ENCODE measurements at regions of chr17 and their contacts with region 1.

Region 1: GRCh38 chr17:38674749-38675615 is at the start of gene EPOP:
- DNase-seq: peak; percentile 92 to 97
- ATAC-seq: peak; percentile 92
- H3K4me3 ChIP-seq: peak within 1 kb of the TSS; percentile 5 to 61
- H3K27ac ChIP-seq: no peak within 1 kb of the TSS
- H3K4me1 ChIP-seq: no peaks in the 10 kb centered on the region
- H3K27me3 ChIP-seq: no peaks in the 10 kb centered on the region
- total RNA-seq, gene EPOP: 1.3 to 1.5 TPM

Region 2: DNA sequence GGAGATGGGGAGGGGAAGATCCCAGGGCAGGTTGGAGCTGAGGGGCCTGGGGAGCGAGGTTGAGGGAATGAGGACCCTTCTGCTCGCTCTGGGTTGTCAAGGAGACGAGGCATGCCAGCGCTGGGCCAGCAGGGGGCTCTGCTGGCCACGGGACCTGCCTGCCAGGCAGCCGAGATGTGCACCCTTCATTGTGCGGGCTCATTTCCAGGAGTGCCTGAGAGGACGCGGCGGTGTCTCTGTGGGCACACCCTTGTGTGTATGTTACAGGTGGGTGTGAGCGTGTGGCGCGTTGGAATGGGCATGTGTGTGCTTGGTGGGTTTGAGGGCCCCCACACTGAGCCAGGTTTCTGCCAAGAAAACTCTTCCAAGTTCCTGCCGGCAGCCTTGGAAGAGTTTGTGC is 230.8 kb before region 1 on chr17:
- intact Hi-C with region 1: loop called in 1 of 2 experiments (anchors 10 kb)
- DNase-seq: peak; percentile 79 to 88
- ATAC-seq: peak; percentile 76
- H3K4me3 ChIP-seq: no peak overlapping the region
- H3K27ac ChIP-seq: no peak overlapping the region
- H3K4me1 ChIP-seq: peaks cover 0 to 2% of the 10 kb centered on the region in 2 donors
- H3K27me3 ChIP-seq: no peaks in the 10 kb centered on the region

Region 3: GRCh38 chr17:38735161-38735997 is 60.4 kb after region 1 on chr17:
- intact Hi-C with region 1: loop called (anchors 2 kb)
- DNase-seq: peak; percentile 72 to 92
- ATAC-seq: peak; percentile 56
- H3K4me3 ChIP-seq: no peak overlapping the region
- H3K27ac ChIP-seq: no peak overlapping the region
- H3K4me1 ChIP-seq: no peaks in the 10 kb centered on the region
- H3K27me3 ChIP-seq: no peaks in the 10 kb centered on the region

Measured in aorta (tissue), 5 donors.